GM12878 (cell line): ENCODE measurements at regions of chr11 and their contacts with region 1.

Region 1: GRCh38 chr11:120688163-120688562 is 176.6 kb downstream of the GRIK4 start:
- DNase-seq: no peak
- ATAC-seq: peak; percentile 52
- H3K4me3 ChIP-seq: no peak overlapping the region
- H3K27ac ChIP-seq: no peak overlapping the region
- H3K4me1 ChIP-seq: no peaks in the 10 kb centered on the region
- H3K27me3 ChIP-seq: no peaks in the 10 kb centered on the region
- CTCF ChIP-seq: no peak
- EP300 ChIP-seq: no peak
- POLR2A ChIP-seq: no peak
- RAD21 ChIP-seq: no peak

Region 2: GRCh38 chr11:120612513-120613263 is 75.5 kb before region 1 on chr11:
- CTCF ChIA-PET with region 1: interaction called, 32 read pairs
- POLR2A ChIA-PET with region 1: interaction called, 5 read pairs
- RAD21 ChIA-PET with region 1: interaction called, 26 read pairs
- SMC1A ChIA-PET with region 1: interaction called, 23 read pairs
- in situ Hi-C with region 1: no loop called
- intact Hi-C with region 1: no loop called
- DNase-seq: peak; percentile 94
- ATAC-seq: peak; percentile 91
- H3K4me3 ChIP-seq: no peak overlapping the region; the same call in 1 of the 2 replicates
- H3K27ac ChIP-seq: peak overlapping the region; percentile 75
- H3K4me1 ChIP-seq: peaks cover 32% of the 10 kb centered on the region
- H3K27me3 ChIP-seq: no peaks in the 10 kb centered on the region
- CTCF ChIP-seq: peak in 1 of 3 experiments; percentile 19; a peak in 1 of 6 replicates
- EP300 ChIP-seq: peak; percentile 76 to 89; a peak in 3 of 4 replicates
- POLR2A ChIP-seq: no peak; the same call in 1 of the 2 replicates
- RAD21 ChIP-seq: no peak

Region 3: GRCh38 chr11:120660024-120660565 is 28.1 kb before region 1 on chr11:
- CTCF ChIA-PET with region 1: interaction called, 111 read pairs
- POLR2A ChIA-PET with region 1: no interaction called
- RAD21 ChIA-PET with region 1: interaction called, 19 read pairs
- SMC1A ChIA-PET with region 1: interaction called, 36 read pairs
- in situ Hi-C with region 1: no loop called
- intact Hi-C with region 1: no loop called
- DNase-seq: no peak
- ATAC-seq: peak; percentile 24
- H3K4me3 ChIP-seq: no peak overlapping the region
- H3K27ac ChIP-seq: no peak overlapping the region
- H3K4me1 ChIP-seq: peaks cover 35% of the 10 kb centered on the region
- H3K27me3 ChIP-seq: no peaks in the 10 kb centered on the region; a peak in 1 of 4 replicates
- CTCF ChIP-seq: peak; percentile 52 to 79 (median 72)
- EP300 ChIP-seq: no peak
- POLR2A ChIP-seq: no peak
- RAD21 ChIP-seq: peak; percentile 53

Region 4: GRCh38 chr11:120710354-120711131 is 22.4 kb after region 1 on chr11:
- CTCF ChIA-PET with region 1: interaction called, 86 read pairs
- POLR2A ChIA-PET with region 1: no interaction called
- RAD21 ChIA-PET with region 1: interaction called, 13 read pairs
- SMC1A ChIA-PET with region 1: interaction called, 23 read pairs
- in situ Hi-C with region 1: no loop called
- intact Hi-C with region 1: no loop called
- DNase-seq: no peak
- ATAC-seq: peak; percentile 45
- H3K4me3 ChIP-seq: peak overlapping the region; percentile 12; the same call in 1 of the 2 replicates
- H3K27ac ChIP-seq: peak overlapping the region; percentile 63
- H3K4me1 ChIP-seq: peaks cover 47% of the 10 kb centered on the region
- H3K27me3 ChIP-seq: no peaks in the 10 kb centered on the region
- CTCF ChIP-seq: no peak
- EP300 ChIP-seq: no peak
- POLR2A ChIP-seq: no peak
- RAD21 ChIP-seq: no peak

Region 5: DNA sequence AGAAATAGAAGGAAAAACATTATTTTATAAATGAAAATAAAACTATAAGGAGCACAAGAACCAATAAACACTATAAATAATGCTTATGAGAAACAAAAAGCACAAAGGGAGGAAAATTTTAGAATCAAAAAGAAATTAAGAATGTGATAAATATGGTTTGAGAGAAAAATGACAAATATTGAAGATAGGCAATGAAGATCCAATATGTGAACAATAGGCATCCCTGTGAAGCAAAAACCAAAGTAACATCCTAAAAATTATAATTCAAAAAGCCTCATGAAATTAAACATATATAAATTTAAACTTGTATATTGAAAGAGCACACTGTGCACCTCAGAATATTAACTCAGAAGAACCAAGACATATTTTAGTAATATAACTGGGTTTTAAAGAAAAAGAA is 39.6 kb after region 1 on chr11:
- CTCF ChIA-PET with region 1: no interaction called
- POLR2A ChIA-PET with region 1: no interaction called
- RAD21 ChIA-PET with region 1: no interaction called
- SMC1A ChIA-PET with region 1: no interaction called
- in situ Hi-C with region 1: no loop called
- intact Hi-C with region 1: no loop called
- DNase-seq: no peak
- ATAC-seq: no peak
- H3K4me3 ChIP-seq: no peak overlapping the region
- H3K27ac ChIP-seq: no peak overlapping the region
- H3K4me1 ChIP-seq: no peaks in the 10 kb centered on the region
- H3K27me3 ChIP-seq: no peaks in the 10 kb centered on the region
- CTCF ChIP-seq: no peak
- EP300 ChIP-seq: no peak
- POLR2A ChIP-seq: no peak
- RAD21 ChIP-seq: no peak

Region 6: DNA sequence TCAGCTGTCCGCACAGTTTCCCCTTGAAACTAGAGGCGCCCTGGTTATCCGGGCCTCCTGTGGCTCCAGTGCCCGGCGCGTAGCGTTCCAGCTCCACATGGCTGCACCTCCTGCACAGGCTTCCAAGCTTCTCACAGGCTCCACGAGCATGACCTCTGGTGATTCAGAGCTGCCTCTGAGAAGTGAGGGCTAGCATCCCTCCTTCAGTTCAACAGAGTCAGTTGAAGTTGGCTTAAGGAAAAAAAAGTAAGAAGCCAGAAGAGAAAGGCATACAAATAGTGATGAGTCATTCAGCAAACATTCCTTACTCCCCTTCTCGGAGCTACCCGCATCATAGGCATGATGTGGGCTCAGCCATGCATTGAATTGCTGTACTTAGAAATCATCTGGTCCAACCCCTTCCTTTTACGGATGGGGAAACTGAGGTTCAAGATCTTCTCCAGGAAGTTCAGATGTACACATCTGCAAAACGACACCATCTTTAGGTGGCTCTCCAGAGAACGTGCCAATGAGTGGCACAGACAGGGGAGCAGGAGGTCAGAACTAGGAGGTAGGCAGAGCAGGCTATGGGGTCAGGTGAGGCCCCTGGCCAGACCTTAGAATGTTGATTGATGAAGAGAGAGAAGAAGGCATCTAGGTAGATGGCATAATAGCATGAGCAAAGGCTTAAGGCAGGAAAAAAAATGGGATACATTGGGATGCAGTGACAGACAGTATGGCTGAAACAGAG is 119.4 kb after region 1 on chr11:
- CTCF ChIA-PET with region 1: interaction called, 34 read pairs
- POLR2A ChIA-PET with region 1: no interaction called
- RAD21 ChIA-PET with region 1: interaction called, 16 read pairs
- SMC1A ChIA-PET with region 1: interaction called, 18 read pairs
- in situ Hi-C with region 1: no loop called
- intact Hi-C with region 1: loop called (anchors 10 kb)
- DNase-seq: no peak
- ATAC-seq: no peak
- H3K4me3 ChIP-seq: no peak overlapping the region
- H3K27ac ChIP-seq: no peak overlapping the region
- H3K4me1 ChIP-seq: no peaks in the 10 kb centered on the region
- H3K27me3 ChIP-seq: no peaks in the 10 kb centered on the region
- CTCF ChIP-seq: no peak
- EP300 ChIP-seq: no peak
- POLR2A ChIP-seq: no peak
- RAD21 ChIP-seq: no peak